ENCODE measurements at regions of chr4 and their contacts with region 1.

Region 1: GRCh38 chr4:42638993-42639392 is 17.9 kb downstream of the ATP8A1 start:
- DNase-seq: peak; percentile 92
- ATAC-seq: peak; percentile 72
- H3K4me3 ChIP-seq: peak overlapping the region; percentile 43
- H3K27ac ChIP-seq: peak overlapping the region; percentile 98
- H3K4me1 ChIP-seq: peaks cover 74% of the 10 kb centered on the region
- H3K27me3 ChIP-seq: no peaks in the 10 kb centered on the region
- CTCF ChIP-seq: no peak
- EP300 ChIP-seq: peak; percentile 81 to 96
- POLR2A ChIP-seq: no peak
- RAD21 ChIP-seq: peak; percentile 2; the same call in 1 of the 2 replicates

Region 2: DNA sequence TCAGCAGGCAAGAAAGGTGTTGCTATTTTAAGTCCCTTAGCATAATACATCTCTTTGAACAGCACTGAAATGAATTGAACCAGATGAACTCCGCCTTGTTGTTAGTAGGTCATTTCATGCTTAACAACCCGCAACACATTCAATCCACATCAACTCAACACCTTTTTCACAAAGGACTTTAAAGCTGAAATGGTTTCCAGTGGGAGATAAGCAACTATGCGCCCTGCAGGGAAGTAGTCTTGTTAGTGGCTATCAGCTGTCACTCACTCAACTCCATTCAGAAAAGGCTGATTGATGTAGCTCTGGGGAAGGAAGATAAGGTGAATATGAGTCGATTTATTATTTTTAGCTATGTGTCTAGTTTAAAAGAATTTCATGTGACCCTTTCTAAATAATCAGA is 28.1 kb before region 1 on chr4:
- CTCF ChIA-PET with region 1: no interaction called
- POLR2A ChIA-PET with region 1: no interaction called
- RAD21 ChIA-PET with region 1: interaction called, 3 read pairs
- SMC1A ChIA-PET with region 1: interaction called, 11 read pairs
- in situ Hi-C with region 1: no loop called
- intact Hi-C with region 1: no loop called
- DNase-seq: no peak
- ATAC-seq: no peak
- H3K4me3 ChIP-seq: no peak overlapping the region
- H3K27ac ChIP-seq: no peak overlapping the region
- H3K4me1 ChIP-seq: no peaks in the 10 kb centered on the region; the same call in none of the 2 replicates
- H3K27me3 ChIP-seq: no peaks in the 10 kb centered on the region
- CTCF ChIP-seq: no peak
- EP300 ChIP-seq: no peak
- POLR2A ChIP-seq: no peak
- RAD21 ChIP-seq: no peak

Region 3: DNA sequence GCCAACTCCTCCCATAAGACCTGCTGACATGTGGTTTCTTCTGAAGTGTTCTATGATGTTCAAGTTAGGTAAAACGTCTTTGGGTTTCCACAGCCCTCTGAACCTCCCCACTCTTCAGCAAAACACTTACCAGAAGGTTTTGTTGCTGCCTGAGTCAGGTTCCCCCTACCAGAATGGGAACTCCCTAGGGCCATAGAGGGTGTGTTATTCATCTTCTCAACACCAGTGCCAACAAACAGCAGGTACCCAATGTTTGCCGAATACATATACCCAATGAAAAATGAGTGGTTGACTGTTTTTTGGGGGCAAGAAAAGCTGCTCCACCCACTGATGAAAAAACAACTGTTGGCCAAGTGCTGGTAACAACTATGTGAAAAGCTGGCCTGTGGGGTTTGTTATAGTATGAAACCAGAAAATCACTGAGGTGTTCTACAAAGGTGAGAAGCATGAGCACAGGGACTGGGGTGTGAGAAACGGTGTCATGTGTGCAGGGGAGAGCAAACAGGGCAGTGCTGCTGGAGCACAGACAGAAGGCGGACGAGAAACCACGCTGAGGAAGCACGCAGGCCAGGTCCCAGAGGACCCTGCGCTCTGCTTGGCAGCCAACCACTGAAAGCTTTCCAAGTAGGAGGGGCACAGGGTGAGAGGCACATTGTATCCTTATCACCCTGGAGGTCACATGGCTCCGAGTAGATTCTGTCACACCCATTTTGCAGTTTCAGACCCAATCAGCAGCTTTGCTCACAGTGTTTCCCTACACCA is 10.9 kb before region 1 on chr4:
- CTCF ChIA-PET with region 1: interaction called, 113 read pairs
- POLR2A ChIA-PET with region 1: interaction called, 254 read pairs
- RAD21 ChIA-PET with region 1: interaction called, 71 read pairs
- SMC1A ChIA-PET with region 1: interaction called, 478 read pairs
- in situ Hi-C with region 1: no loop called
- intact Hi-C with region 1: loop called (anchors 1 kb)
- DNase-seq: peak; percentile 97
- ATAC-seq: peak; percentile 92
- H3K4me3 ChIP-seq: peak overlapping the region; percentile 25; the same call in 1 of the 2 replicates
- H3K27ac ChIP-seq: peak overlapping the region; percentile 79
- H3K4me1 ChIP-seq: peaks cover 30% of the 10 kb centered on the region
- H3K27me3 ChIP-seq: no peaks in the 10 kb centered on the region
- CTCF ChIP-seq: no peak
- EP300 ChIP-seq: peak in 1 of 2 experiments; percentile 82; a peak in 3 of 4 replicates
- POLR2A ChIP-seq: peak; percentile 75
- RAD21 ChIP-seq: peak; percentile 32; the same call in 1 of the 2 replicates